K562 (cell line): ENCODE measurements at regions of chr15 and their contacts with region 1.

Region 1: DNA sequence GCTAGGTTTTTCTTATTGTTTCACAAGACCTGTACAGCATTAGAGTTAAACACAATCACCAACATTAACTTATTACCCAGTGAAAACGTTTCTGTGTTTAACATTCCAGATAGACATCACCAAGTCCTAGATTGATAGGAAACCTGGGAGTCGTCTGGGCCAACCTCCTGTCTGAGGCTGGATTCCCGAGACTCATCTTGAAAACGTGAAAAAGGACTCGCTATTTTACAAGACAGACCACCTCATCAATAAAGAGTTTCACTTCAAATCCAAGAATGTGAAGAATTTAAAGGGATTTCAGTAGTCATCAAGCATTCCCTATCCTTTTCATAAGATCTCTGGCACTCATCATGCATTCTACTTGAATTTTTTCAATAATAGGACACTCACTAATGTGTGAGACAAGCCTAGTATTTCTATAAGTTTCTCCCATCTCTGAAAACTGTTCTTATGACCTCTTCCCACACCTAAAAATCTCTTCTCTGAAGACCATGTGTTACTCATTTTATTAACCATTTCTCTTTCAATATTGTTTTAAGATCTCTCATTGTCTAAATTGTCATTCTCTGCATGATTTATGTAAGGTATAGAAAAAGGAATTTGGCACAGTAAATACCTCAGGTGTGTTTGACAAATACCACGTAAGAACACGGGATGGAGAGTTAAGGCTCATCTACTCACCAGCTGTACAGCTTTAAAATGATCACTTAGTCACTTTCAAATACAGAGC is 626.8 kb downstream of the MCTP2 start:
- DNase-seq: peak in 2 of 4 experiments; percentile 10 to 27
- ATAC-seq: peak; percentile 15
- H3K4me3 ChIP-seq: peak overlapping the region; percentile 72
- H3K27ac ChIP-seq: peak overlapping the region; percentile 92
- H3K4me1 ChIP-seq: peaks cover 9 to 20% of the 10 kb centered on the region in 2 experiments; a peak in 4 of 5 replicates
- H3K27me3 ChIP-seq: no peaks in the 10 kb centered on the region
- CTCF ChIP-seq: no peak
- EP300 ChIP-seq: no peak
- POLR2A ChIP-seq: no peak
- RAD21 ChIP-seq: no peak

Region 2: GRCh38 chr15:94844538-94845389 is 13.4 kb before region 1 on chr15:
- CTCF ChIA-PET with region 1: no interaction called
- POLR2A ChIA-PET with region 1: interaction called, 13 read pairs
- in situ Hi-C with region 1: no loop called
- intact Hi-C with region 1: no loop called
- DNase-seq: peak; percentile 86 to 92 (median 90)
- ATAC-seq: peak; percentile 90
- H3K4me3 ChIP-seq: peak overlapping the region; percentile 32
- H3K27ac ChIP-seq: peak overlapping the region; percentile 91
- H3K4me1 ChIP-seq: peaks cover 11 to 20% of the 10 kb centered on the region in 2 experiments; a peak in 3 of 5 replicates
- H3K27me3 ChIP-seq: no peaks in the 10 kb centered on the region
- CTCF ChIP-seq: peak; percentile 32 to 46 (median 34); a peak in 5 of 6 replicates
- EP300 ChIP-seq: peak; percentile 26
- POLR2A ChIP-seq: peak; percentile 63
- RAD21 ChIP-seq: no peak; a peak in 2 of 4 replicates

Region 3: DNA sequence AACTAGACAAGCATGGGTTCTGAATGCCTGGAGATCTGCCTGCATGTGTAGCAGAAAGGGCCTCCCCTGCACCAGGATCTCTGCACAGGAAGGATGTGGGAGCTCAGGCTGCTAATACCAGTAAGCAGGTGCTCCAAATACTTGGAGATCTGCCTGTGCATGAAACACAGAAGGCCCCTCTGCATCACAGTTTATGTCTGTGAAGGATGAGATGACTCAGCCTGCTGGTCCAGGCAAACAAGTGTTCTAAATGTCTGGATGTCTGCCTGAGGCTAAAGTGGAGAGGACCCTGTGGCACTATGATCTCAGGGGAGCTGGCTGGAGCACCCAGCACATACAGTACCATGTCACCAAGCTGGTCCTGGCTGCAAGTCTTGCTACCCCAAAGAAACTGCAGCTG is 52.0 kb after region 1 on chr15:
- CTCF ChIA-PET with region 1: no interaction called
- POLR2A ChIA-PET with region 1: no interaction called
- in situ Hi-C with region 1: no loop called
- intact Hi-C with region 1: loop called (anchors 5 kb)
- DNase-seq: peak in 1 of 4 experiments; percentile 12
- ATAC-seq: peak; percentile 61
- H3K4me3 ChIP-seq: no peak overlapping the region
- H3K27ac ChIP-seq: no peak overlapping the region
- H3K4me1 ChIP-seq: peaks cover 0 to 8% of the 10 kb centered on the region in 2 experiments; a peak in 3 of 5 replicates
- H3K27me3 ChIP-seq: no peaks in the 10 kb centered on the region
- CTCF ChIP-seq: no peak
- EP300 ChIP-seq: no peak
- POLR2A ChIP-seq: no peak
- RAD21 ChIP-seq: no peak

Region 4: GRCh38 chr15:95169541-95170459 is 311.6 kb after region 1 on chr15:
- CTCF ChIA-PET with region 1: no interaction called
- POLR2A ChIA-PET with region 1: no interaction called
- in situ Hi-C with region 1: no loop called
- intact Hi-C with region 1: loop called (anchors 10 kb)
- DNase-seq: peak in 2 of 4 experiments; percentile 29 to 60
- ATAC-seq: peak; percentile 74
- H3K4me3 ChIP-seq: peak overlapping the region; percentile 13; the same call in 1 of the 2 replicates
- H3K27ac ChIP-seq: peak overlapping the region; percentile 88
- H3K4me1 ChIP-seq: peaks cover 19 to 36% of the 10 kb centered on the region in 2 experiments
- H3K27me3 ChIP-seq: no peaks in the 10 kb centered on the region
- CTCF ChIP-seq: no peak
- EP300 ChIP-seq: no peak
- POLR2A ChIP-seq: no peak
- RAD21 ChIP-seq: no peak